Breast epithelium (tissue), 4 donors: ENCODE measurements at regions of chr7 and their contacts with region 1.

Region 1: GRCh38 chr7:85023045-85023712 is 163.7 kb downstream of the SEMA3D start:
- DNase-seq: no peak
- H3K4me3 ChIP-seq: no peak overlapping the region
- H3K27ac ChIP-seq: no peak overlapping the region
- H3K4me1 ChIP-seq: no peaks in the 10 kb centered on the region
- H3K27me3 ChIP-seq: no peaks in the 10 kb centered on the region
- CTCF ChIP-seq: peak; percentile 70 to 86 (median 84)
- POLR2A ChIP-seq: no peak

Region 2: GRCh38 chr7:84510505-84510904 is 512.7 kb before region 1 on chr7:
- intact Hi-C with region 1: no loop called
- DNase-seq: no peak
- H3K4me3 ChIP-seq: no peak overlapping the region
- H3K27ac ChIP-seq: no peak overlapping the region
- H3K4me1 ChIP-seq: no peaks in the 10 kb centered on the region
- H3K27me3 ChIP-seq: no peaks in the 10 kb centered on the region
- CTCF ChIP-seq: no peak
- POLR2A ChIP-seq: no peak

Region 3: GRCh38 chr7:84950836-84951235 is 72.3 kb before region 1 on chr7:
- intact Hi-C with region 1: no loop called
- DNase-seq: no peak
- H3K4me3 ChIP-seq: no peak overlapping the region
- H3K27ac ChIP-seq: no peak overlapping the region
- H3K4me1 ChIP-seq: no peaks in the 10 kb centered on the region
- H3K27me3 ChIP-seq: no peaks in the 10 kb centered on the region
- CTCF ChIP-seq: no peak
- POLR2A ChIP-seq: no peak

Region 4: GRCh38 chr7:84975586-84976185 is 47.5 kb before region 1 on chr7:
- intact Hi-C with region 1: loop called (anchors 2 kb)
- DNase-seq: no peak
- H3K4me3 ChIP-seq: no peak overlapping the region
- H3K27ac ChIP-seq: no peak overlapping the region
- H3K4me1 ChIP-seq: no peaks in the 10 kb centered on the region
- H3K27me3 ChIP-seq: no peaks in the 10 kb centered on the region
- CTCF ChIP-seq: no peak
- POLR2A ChIP-seq: no peak

Region 5: DNA sequence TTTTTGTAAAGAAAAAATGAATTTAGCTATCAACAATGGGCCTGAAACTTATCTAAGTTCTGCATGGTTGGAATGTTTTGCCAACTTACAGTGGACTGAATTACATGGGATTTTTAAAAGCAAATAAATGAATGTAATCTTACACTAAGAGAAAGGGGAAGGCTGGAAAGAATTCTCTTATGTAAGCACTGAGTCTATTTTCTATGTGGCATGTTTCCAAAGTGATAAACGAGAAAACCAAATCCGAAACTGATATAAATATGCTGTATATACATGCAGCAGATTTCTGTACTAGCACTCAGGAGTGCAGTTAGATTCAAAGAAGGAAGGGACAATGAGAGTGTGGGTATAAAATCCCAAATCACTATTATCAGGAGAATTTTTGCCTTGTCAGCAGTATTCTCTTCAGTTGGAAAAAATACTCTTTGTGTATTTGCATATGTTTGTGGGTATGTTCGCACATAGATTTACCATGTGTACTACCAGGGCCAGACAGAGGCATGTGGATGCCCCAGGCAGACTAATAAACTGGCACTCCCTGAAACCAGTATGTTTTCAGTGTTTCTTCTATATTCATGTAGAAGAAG is 498.0 kb after region 1 on chr7:
- intact Hi-C with region 1: no loop called
- DNase-seq: no peak
- H3K4me3 ChIP-seq: no peak overlapping the region
- H3K27ac ChIP-seq: no peak overlapping the region
- H3K4me1 ChIP-seq: no peaks in the 10 kb centered on the region
- H3K27me3 ChIP-seq: no peaks in the 10 kb centered on the region
- CTCF ChIP-seq: no peak
- POLR2A ChIP-seq: no peak

Region 6: GRCh38 chr7:85829817-85830432 is 806.7 kb after region 1 on chr7:
- intact Hi-C with region 1: loop called (anchors 10 kb)
- DNase-seq: no peak
- H3K4me3 ChIP-seq: no peak overlapping the region
- H3K27ac ChIP-seq: no peak overlapping the region
- H3K4me1 ChIP-seq: no peaks in the 10 kb centered on the region
- H3K27me3 ChIP-seq: no peaks in the 10 kb centered on the region
- CTCF ChIP-seq: no peak
- POLR2A ChIP-seq: no peak